Dendritic cell treated with granulocyte-macrophage colony-stimulating factor and Interleukin-4, amounts not matched to agents 40 ng/mL and 50 ng/mL, for 4 days (primary cell): ENCODE measurements at regions of chr14 and their contacts with region 1.

Region 1: DNA sequence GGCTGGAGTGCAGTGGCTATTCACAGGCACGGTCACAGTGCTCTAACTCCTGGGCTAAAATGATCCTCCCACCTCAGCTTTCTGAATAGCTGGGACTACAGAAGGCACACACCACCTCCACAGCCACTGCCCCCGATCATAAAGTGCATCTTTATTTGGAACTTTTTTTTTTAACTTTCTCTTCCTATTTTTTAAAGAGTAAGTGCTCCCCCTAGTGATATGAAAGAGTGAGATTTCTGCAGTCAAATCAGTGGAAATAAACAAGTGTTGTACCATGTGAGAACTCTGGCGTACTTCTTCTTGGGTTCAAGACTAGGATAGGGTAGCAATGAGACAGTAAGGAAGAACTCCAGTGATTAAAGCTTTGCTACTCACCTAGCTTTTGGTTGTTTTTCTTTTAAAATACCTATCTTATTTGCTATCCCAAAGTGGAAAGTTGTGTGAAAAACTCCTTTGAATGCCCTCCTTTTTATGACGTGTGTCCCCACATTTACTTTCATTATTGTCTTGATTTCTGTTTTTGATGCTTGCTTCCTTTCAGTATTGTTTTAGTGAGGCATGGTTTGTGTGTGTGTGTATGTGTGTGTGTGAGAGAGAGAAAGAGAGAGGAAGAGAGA is 6.6 kb downstream of the PPP4R4 start:
- H3K4me3 Mint-ChIP-seq: peak overlapping the region; percentile 0
- H3K27ac Mint-ChIP-seq: peak overlapping the region; percentile 2
- H3K4me1 Mint-ChIP-seq: peaks cover 6% of the 10 kb centered on the region
- H3K27me3 Mint-ChIP-seq: peaks cover 38% of the 10 kb centered on the region

Region 2: DNA sequence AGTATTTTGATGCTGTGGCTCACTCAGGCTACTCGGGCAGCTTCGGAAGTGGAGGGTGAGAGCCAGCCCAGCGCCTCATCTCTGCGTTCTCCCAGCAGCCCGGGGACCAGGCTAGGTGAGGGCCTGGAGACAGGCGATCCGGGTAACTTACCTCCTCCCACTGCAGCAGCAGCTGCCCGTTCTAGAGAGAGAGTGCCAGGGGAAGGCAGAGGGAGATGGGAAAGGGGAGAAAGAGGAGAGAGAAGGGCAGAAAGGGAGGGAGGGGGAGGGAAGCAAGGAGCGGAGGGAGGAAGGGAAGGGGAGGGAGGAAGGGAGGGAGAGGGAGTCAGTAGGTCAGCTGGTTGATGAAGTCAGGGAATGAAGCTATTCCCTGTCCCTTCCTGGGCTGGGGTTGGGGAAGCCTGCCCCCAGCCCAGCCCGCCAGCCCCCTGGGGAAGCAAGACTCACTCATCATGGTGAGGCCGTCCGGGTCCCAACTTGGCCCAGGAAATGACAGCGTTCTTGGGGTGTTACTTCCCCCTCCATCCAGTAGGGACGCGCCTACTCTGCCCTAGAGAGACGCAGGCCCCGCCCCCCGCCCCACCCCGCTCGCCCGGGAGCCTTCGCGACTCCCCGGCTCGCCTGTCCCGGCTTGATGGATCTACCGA is 51.5 kb before region 1 on chr14 and contains the start of gene IFI27L2:
- intact Hi-C with region 1: loop called (anchors 2 kb)
- H3K4me3 Mint-ChIP-seq: peak within 1 kb of the TSS; percentile 88
- H3K27ac Mint-ChIP-seq: peak within 1 kb of the TSS; percentile 84
- H3K4me1 Mint-ChIP-seq: peaks cover 27% of the 10 kb centered on the region
- H3K27me3 Mint-ChIP-seq: peaks cover 11% of the 10 kb centered on the region